Activated B cell treated with CpG ODN at 0.5 μM for 24 hours (primary cell): ENCODE measurements at regions of chr5 and their contacts with region 1.

Region 1: GRCh38 chr5:26482810-26483375 is 555.5 kb downstream of the CDH9 start:
- DNase-seq: no peak
- ATAC-seq: no peak
- H3K4me3 Mint-ChIP-seq: no peak overlapping the region
- H3K27ac Mint-ChIP-seq: no peak overlapping the region
- H3K4me1 Mint-ChIP-seq: no peaks in the 10 kb centered on the region
- H3K27me3 Mint-ChIP-seq: no peaks in the 10 kb centered on the region
- CTCF ChIP-seq: no peak

Region 2: GRCh38 chr5:24633712-24634325 is 1849.1 kb before region 1 on chr5:
- CTCF ChIA-PET with region 1: no interaction called
- POLR2A ChIA-PET with region 1: no interaction called
- intact Hi-C with region 1: loop called (anchors 5 kb)
- DNase-seq: no peak
- ATAC-seq: peak; percentile 31
- H3K4me3 Mint-ChIP-seq: no peak overlapping the region
- H3K27ac Mint-ChIP-seq: no peak overlapping the region
- H3K4me1 Mint-ChIP-seq: no peaks in the 10 kb centered on the region
- H3K27me3 Mint-ChIP-seq: no peaks in the 10 kb centered on the region
- CTCF ChIP-seq: peak; percentile 40